ENCODE measurements at regions of chr6 and their contacts with region 1.

Region 1: GRCh38 chr6:142946181-142946923 is 1.4 kb upstream of the HIVEP2 start:
- DNase-seq: peak; percentile 97
- H3K4me3 Mint-ChIP-seq: peak overlapping the region; percentile 99
- H3K27ac Mint-ChIP-seq: peak overlapping the region; percentile 98
- H3K4me1 Mint-ChIP-seq: peaks cover 29% of the 10 kb centered on the region
- H3K27me3 Mint-ChIP-seq: no peaks in the 10 kb centered on the region

Region 2: GRCh38 chr6:142551274-142551811 is 395.0 kb before region 1 on chr6:
- CTCF ChIA-PET with region 1: no interaction called
- intact Hi-C with region 1: loop called (anchors 1 kb)
- DNase-seq: peak; percentile 86
- H3K4me3 Mint-ChIP-seq: peak overlapping the region; percentile 36
- H3K27ac Mint-ChIP-seq: no peak overlapping the region
- H3K4me1 Mint-ChIP-seq: peaks cover 27% of the 10 kb centered on the region
- H3K27me3 Mint-ChIP-seq: no peaks in the 10 kb centered on the region

Region 3: DNA sequence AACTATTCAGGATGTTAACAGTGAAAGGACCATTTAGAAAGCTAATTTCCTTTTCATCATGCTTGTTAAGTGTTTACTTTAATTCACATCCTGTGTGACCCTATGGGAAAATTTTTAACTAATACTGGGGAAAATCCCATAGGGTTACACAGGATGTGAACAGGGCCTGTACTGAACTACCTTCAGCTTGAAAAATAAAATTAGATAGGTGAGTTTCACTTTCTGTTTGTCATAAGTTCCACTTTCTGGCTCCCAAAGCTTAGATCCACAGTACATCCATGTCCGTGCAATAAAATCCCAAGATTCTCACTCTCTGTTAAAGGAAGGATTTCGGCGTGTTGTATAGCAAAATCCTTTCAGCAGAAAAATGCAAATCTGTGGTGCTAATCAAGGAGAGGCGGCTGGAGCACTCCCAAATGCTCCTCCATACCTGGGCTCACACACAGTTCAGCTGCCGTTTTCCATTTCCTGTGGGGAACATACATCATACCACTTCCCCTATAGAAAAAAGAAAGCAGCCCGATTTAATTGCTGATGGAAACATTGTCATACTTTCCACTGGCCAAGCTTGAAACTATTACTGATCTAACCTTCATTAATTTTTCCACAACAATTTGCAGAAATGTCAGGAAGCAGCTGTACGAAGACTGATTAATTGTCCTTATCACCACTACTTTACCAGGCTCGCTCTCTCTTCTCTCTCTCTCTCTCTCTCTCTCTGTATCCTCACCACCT is 126.6 kb before region 1 on chr6:
- CTCF ChIA-PET with region 1: interaction called, 5 read pairs
- intact Hi-C with region 1: loop called (anchors 1 kb)
- DNase-seq: peak; percentile 65
- H3K4me3 Mint-ChIP-seq: peak overlapping the region; percentile 79
- H3K27ac Mint-ChIP-seq: peak overlapping the region; percentile 94
- H3K4me1 Mint-ChIP-seq: peaks cover 83% of the 10 kb centered on the region
- H3K27me3 Mint-ChIP-seq: no peaks in the 10 kb centered on the region

Region 4: DNA sequence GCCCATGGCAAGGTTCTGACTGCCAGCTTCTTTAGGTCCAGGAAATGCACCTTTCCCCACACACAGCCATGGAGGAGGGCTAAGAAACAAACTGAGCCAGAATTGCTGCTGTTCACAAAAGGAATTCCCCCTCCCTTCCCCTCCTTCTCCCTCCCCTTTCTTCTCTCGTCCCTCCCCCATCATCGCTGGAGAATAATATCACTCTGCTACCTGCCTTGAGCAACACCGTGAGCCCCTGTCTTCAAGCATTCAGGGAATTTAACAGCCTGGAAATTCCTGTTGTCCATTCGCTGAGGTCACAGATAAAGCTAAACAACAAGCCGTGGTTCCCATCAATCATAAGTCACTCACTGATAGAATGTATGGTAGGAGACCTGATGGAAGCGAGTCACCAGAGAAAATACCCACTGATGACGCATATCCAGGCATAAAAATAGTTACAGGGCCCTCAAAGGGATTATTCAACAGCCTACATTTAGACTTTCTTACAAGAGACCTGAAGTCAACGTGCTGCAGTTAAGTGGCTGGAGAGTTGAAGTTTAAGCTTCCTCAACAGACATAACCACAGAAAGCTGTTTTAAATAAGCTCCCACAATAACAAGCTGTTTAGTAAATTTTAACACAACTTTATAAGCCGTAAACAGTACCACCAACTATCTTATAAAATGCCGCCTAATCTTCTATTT is 61.0 kb before region 1 on chr6:
- CTCF ChIA-PET with region 1: interaction called, 5 read pairs
- intact Hi-C with region 1: loop called (anchors 1 kb)
- DNase-seq: peak; percentile 66
- H3K4me3 Mint-ChIP-seq: peak overlapping the region; percentile 90
- H3K27ac Mint-ChIP-seq: peak overlapping the region; percentile 99
- H3K4me1 Mint-ChIP-seq: peaks cover 87% of the 10 kb centered on the region
- H3K27me3 Mint-ChIP-seq: no peaks in the 10 kb centered on the region

Region 5: DNA sequence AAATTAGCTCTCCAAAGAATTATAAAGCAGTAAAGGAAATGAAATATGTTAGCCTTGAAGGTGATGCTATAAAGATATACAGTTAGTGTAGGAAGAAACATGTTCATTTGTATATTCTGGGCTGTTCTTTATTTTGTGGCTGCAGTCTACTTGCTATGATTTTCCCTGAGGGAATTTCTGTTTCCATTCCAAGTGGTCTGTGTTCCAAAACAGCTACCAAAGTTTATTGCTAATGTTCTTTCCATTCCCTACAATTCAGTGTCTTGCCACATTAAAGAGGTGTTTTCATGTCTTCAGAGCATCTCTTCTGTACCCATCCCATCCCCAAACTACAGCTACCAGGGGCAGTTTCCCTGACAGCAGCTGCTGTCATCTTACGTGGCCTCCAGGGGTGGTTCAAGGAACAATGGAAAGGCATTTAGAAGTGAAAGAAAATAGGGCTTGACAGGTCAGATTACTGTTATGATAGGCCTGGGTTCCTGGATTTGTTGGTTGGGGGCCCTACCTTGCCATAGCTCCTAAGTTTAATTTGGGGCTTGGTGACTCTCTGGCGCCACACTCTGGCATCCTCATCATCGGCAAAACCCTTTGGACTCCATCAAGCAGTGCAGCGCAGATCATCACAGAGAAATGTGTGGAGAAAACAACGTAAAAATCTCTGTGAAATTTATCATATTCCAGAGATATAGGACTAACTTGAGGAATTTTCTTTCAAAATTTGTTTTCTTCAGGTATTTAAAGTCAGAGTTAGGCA is 80.5 kb after region 1 on chr6:
- CTCF ChIA-PET with region 1: interaction called, 4 read pairs
- intact Hi-C with region 1: loop called (anchors 2 kb)
- DNase-seq: peak; percentile 76
- H3K4me3 Mint-ChIP-seq: no peak overlapping the region
- H3K27ac Mint-ChIP-seq: no peak overlapping the region
- H3K4me1 Mint-ChIP-seq: peaks cover 7% of the 10 kb centered on the region
- H3K27me3 Mint-ChIP-seq: no peaks in the 10 kb centered on the region

Region 6: GRCh38 chr6:143450453-143451371 is 504.4 kb after region 1 on chr6 and contains the starts of genes ADAT2 and PEX3:
- CTCF ChIA-PET with region 1: no interaction called
- intact Hi-C with region 1: loop called (anchors 1 kb)
- DNase-seq: peak; percentile 96
- H3K4me3 Mint-ChIP-seq: peak within 1 kb of the TSS; percentile 100
- H3K27ac Mint-ChIP-seq: peak within 1 kb of the TSS; percentile 97
- H3K4me1 Mint-ChIP-seq: peaks cover 50% of the 10 kb centered on the region
- H3K27me3 Mint-ChIP-seq: no peaks in the 10 kb centered on the region
- total RNA-seq, gene ADAT2: 36.8 to 39.5 TPM
- total RNA-seq, gene PEX3: 10.8 to 11.9 TPM

Measured in activated naive CD4-positive, alpha-beta T cell treated with anti-CD3 and anti-CD28 coated beads for 36 hours (primary cell).